ENCODE measurements at regions of chr16 and their contacts with region 1.

Region 1: DNA sequence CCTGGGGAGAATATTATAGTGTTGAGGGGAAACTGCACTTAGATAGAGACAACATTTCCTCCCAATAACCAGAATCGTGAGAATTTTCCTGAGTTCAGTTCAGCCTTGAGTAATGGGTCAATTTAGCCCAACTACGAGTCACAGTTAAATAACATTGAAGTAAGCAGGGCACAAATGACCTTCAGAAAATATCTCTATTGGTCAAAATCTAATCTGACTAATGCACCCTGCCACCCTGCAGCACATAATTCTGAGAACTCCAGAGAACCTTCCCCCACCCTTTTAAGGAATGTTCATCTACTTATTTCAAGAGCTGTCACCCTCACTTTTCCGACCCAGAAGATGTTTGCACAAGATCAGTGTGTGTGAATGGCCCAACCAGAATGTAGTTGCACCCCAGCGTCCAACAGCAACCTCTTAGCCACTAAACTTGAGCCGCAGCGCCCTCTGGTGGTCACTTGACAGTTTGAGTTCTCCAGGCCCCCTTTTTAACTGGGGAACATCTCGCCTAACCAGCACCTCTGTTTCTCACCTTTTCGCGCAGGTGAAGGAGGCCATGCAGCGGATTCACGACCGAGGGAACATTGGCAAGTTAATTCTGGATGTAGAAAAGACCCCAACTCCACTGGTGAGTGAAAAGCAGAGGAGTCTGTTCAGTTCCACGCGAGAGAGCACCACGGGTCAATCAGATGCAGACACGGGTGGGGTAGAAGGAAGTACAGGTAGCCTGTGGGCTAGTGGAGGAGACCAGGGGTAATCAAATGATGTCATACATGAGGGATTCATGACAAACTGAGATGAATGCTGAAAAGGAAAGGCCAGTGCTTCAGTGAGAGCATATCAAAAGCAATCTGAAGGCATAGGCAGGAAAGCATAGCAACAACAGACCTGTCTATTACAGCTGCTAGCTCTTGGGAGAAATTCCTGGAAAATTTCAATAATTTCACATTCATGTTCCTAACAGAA is 50.8 kb upstream of the CLEC3A start:
- DNase-seq: peak; percentile 51
- H3K4me3 Mint-ChIP-seq: no peak overlapping the region
- H3K27ac Mint-ChIP-seq: no peak overlapping the region
- H3K4me1 Mint-ChIP-seq: no peaks in the 10 kb centered on the region
- H3K27me3 Mint-ChIP-seq: peaks cover 8% of the 10 kb centered on the region

Region 2: DNA sequence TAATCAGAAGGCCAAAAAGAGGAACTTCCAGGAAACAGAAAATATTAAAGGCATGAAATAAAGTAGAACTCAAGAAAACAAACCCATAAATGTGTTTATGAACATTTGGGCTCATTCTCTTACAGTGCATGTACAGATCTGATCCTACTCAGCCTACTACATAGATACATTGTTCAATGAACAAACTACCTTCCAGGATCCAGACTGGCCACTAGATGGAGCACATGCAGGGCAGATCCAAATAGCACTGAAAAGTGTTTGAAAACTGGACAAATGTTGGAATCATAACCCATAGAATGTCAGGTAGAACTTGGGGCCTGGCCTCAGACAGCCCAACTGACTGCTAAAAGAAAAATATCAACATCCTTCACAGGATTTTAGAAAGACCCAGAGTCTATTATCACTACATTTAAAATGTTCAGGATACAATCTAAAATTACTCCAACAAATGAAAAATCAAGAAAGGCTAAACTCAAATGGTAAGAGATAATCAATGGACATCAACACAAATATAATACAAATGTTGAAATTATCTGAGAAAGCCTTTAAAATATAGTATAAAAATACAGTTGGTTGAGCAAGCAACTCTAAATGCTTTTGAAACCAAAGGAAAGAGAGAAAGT is 371.7 kb before region 1 on chr16:
- intact Hi-C with region 1: loop called (anchors 5 kb)
- DNase-seq: no peak
- H3K4me3 Mint-ChIP-seq: no peak overlapping the region
- H3K27ac Mint-ChIP-seq: no peak overlapping the region
- H3K4me1 Mint-ChIP-seq: no peaks in the 10 kb centered on the region
- H3K27me3 Mint-ChIP-seq: peaks cover 1% of the 10 kb centered on the region

Region 3: GRCh38 chr16:77675464-77676324 is 295.9 kb before region 1 on chr16:
- intact Hi-C with region 1: loop called (anchors 1 kb)
- DNase-seq: peak; percentile 36
- H3K4me3 Mint-ChIP-seq: no peak overlapping the region
- H3K27ac Mint-ChIP-seq: no peak overlapping the region
- H3K4me1 Mint-ChIP-seq: no peaks in the 10 kb centered on the region
- H3K27me3 Mint-ChIP-seq: peaks cover 7% of the 10 kb centered on the region

Region 4: DNA sequence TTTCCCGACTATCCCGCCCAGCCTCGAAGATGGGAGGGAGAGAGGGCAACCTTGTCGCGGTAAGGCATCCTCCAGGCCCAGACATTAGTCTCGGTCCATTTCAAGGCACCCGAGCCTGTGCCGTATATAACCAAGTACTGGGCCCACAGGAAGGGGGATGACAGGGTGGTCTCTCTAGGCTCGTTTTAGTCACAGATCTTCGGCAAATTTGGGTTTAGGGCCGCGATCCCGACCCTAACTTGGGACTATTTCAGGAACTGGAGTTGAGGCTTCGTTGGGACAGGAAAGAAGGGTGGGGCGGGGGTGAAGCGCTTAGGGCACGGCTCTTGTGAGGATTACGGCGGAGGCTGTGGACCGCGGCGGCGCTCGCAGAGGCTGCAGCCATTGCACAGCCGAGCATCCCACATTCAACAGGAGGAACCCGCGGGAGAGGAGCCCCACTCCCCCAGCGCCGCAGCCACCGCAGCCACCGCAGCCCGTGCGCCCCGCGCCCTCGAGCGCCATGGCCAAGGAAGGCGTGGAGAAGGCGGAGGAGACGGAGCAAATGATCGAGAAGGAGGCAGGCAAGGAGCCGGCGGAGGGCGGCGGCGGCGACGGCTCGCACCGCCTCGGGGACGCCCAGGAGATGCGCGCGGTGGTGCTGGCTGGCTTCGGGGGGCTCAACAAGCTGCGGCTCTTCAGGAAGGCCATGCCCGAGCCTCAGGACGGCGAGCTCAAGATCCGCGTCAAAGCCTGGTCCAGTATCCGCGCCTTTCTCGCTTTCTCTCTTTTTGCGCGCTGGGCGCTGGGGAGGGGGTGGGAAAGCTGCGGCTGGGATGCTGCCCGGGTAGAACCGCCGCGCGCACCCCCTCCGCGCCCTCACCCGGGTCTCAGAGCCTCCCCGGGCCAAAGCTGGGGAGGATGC is 183.2 kb before region 1 on chr16 and contains the start of gene VAT1L:
- intact Hi-C with region 1: loop called (anchors 10 kb)
- DNase-seq: peak; percentile 0
- H3K4me3 Mint-ChIP-seq: peak within 1 kb of the TSS; percentile 74
- H3K27ac Mint-ChIP-seq: no peak within 1 kb of the TSS
- H3K4me1 Mint-ChIP-seq: peaks cover 6% of the 10 kb centered on the region
- H3K27me3 Mint-ChIP-seq: peaks cover 44% of the 10 kb centered on the region
- total RNA-seq, gene VAT1L: not detected in 2 replicates

Region 5: DNA sequence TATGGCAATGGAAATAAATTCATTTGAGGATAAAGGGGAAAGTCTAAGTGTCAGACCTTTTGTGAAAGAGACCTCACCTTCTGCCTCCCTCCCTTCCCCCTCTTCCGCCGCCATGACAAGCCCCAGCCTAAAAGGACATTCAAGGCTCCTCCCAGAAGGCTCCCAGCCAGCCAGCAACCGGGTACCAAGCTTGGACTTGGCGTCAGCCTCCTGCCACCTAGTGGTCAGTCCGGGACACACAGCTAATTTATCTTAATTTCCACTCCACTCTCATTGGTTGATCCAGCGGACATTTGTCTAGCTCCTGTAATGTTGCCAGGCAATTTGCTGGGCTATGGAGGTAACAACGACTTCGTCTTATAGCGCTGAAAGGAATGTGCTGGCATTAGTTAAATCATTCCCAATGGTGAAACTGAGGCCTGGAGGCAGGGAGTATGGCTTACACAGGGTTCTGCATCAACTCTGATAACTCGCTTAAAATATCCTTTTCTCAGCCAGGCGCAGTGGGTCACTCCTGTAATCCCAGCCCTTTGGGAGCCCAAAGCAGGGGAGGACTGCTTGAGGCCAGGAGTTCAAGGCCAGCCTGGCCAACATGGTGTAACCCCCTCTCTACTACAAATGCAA is 31.4 kb after region 1 on chr16:
- intact Hi-C with region 1: loop called (anchors 2 kb)
- DNase-seq: peak; percentile 55
- H3K4me3 Mint-ChIP-seq: no peak overlapping the region
- H3K27ac Mint-ChIP-seq: no peak overlapping the region
- H3K4me1 Mint-ChIP-seq: peaks cover 5% of the 10 kb centered on the region
- H3K27me3 Mint-ChIP-seq: peaks cover 2% of the 10 kb centered on the region